Activated naive CD4-positive, alpha-beta T cell treated with anti-CD3 and anti-CD28 coated beads, Interleukin-2, amount 10 ng/mL, durations not matched to agents 7 days and 5 days (primary cell): ENCODE measurements at regions of chr16 and their contacts with region 1.

Region 1: GRCh38 chr16:28304214-28304613 is 11.9 kb downstream of the SBK1 start:
- DNase-seq: peak; percentile 62
- H3K4me3 Mint-ChIP-seq: no peak overlapping the region
- H3K27ac Mint-ChIP-seq: no peak overlapping the region
- H3K4me1 Mint-ChIP-seq: peaks cover 19% of the 10 kb centered on the region
- H3K27me3 Mint-ChIP-seq: peaks cover 4% of the 10 kb centered on the region

Region 2: DNA sequence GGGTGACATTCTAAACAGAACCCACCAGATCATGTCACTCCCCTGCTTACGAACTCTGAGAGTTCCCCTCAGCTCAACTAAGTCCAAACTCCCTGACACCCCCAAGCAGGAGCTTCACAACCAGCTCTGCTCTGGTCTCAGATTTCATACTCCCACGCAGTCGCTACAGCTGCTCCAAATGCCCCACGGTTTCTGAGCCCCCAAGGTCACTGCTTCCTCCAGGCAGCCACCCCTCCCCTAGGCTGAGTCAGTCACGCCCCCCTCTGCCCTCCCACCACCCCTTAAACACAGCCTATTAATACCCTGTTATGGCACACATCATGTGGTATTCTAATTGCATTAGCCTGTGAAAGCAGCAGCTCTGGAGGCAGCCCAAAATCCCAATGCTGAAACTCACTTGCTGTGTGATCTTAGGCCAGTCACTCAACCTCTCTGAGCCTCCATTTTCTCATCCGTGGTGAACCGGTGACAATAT is 292.2 kb before region 1 on chr16:
- CTCF ChIA-PET with region 1: no interaction called
- DNase-seq: no peak
- H3K4me3 Mint-ChIP-seq: no peak overlapping the region
- H3K27ac Mint-ChIP-seq: no peak overlapping the region
- H3K4me1 Mint-ChIP-seq: no peaks in the 10 kb centered on the region
- H3K27me3 Mint-ChIP-seq: peaks cover 19% of the 10 kb centered on the region

Region 3: GRCh38 chr16:28317040-28317880 is 13.0 kb after region 1 on chr16:
- CTCF ChIA-PET with region 1: interaction called, 17 read pairs
- DNase-seq: peak; percentile 80
- H3K4me3 Mint-ChIP-seq: no peak overlapping the region
- H3K27ac Mint-ChIP-seq: no peak overlapping the region
- H3K4me1 Mint-ChIP-seq: peaks cover 13% of the 10 kb centered on the region
- H3K27me3 Mint-ChIP-seq: no peaks in the 10 kb centered on the region